ENCODE measurements at regions of chr7 and their contacts with region 1.

Region 1: DNA sequence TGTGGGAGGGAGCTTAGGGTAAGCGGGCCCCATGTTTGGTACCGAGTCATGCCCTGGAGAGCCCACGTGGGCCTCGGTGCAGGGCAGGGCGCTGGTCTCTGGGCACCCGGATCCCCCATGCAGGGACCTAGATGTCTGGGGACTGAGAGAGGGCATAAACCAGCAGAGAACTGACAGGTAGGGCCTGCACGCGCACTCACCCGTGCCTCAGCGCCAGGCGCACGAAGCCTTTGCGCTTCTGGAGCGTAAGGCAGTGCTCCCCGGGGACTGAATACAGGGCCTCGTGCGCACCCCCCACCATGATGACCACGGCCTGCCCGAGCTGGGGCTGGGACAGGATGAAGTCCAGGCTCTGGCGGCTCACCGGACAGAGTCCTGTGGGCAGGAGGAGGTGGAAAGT is 2.8 kb downstream of the MOGAT3 start:
- DNase-seq: no peak
- ATAC-seq: no peak
- H3K4me3 ChIP-seq: no peak overlapping the region
- H3K4me3 Mint-ChIP-seq: no peak overlapping the region
- H3K27ac ChIP-seq: no peak overlapping the region
- H3K27ac Mint-ChIP-seq: no peak overlapping the region
- H3K4me1 ChIP-seq: peaks cover 0 to 18% of the 10 kb centered on the region in 2 experiments
- H3K4me1 Mint-ChIP-seq: peaks cover 6 to 18% (median 8%) of the 10 kb centered on the region in 3 donors
- H3K27me3 ChIP-seq: peaks cover 3 to 74% of the 10 kb centered on the region in 2 experiments
- H3K27me3 Mint-ChIP-seq: peaks cover 15 to 32% of the 10 kb centered on the region in 2 donors

Region 2: GRCh38 chr7:100680167-100680575 is 517.8 kb before region 1 on chr7:
- CTCF ChIA-PET with region 1: no interaction called
- POLR2A ChIA-PET with region 1: interaction called in 1 of 2 experiments, 14 read pairs
- DNase-seq: no peak
- ATAC-seq: no peak
- H3K4me3 ChIP-seq: no peak overlapping the region
- H3K4me3 Mint-ChIP-seq: peak overlapping the region in 1 of 3 donors; percentile 22
- H3K27ac ChIP-seq: no peak overlapping the region
- H3K27ac Mint-ChIP-seq: peak overlapping the region; percentile 28 to 34
- H3K4me1 ChIP-seq: peaks cover 11 to 63% of the 10 kb centered on the region in 2 experiments
- H3K4me1 Mint-ChIP-seq: peaks cover 38 to 44% (median 42%) of the 10 kb centered on the region in 3 donors
- H3K27me3 ChIP-seq: no peaks in the 10 kb centered on the region
- H3K27me3 Mint-ChIP-seq: no peaks in the 10 kb centered on the region

Measured in T-cell (primary cell).